ENCODE measurements at regions of chr1 and their contacts with region 1.

Region 1: GRCh38 chr1:45750298-45751038 is at the start of gene IPP:
- DNase-seq: peak; percentile 99
- H3K4me3 ChIP-seq: peak within 1 kb of the TSS; percentile 65 to 83 (median 81)
- H3K27ac ChIP-seq: peak within 1 kb of the TSS; percentile 97
- H3K4me1 ChIP-seq: peaks cover 8% of the 10 kb centered on the region
- H3K27me3 ChIP-seq: no peaks in the 10 kb centered on the region
- CTCF ChIP-seq: peak in 1 of 2 donors; percentile 11
- POLR2A ChIP-seq: peak; percentile 98
- total RNA-seq, gene IPP: 6.3 and 7.2 TPM in 2 replicates

Region 2: GRCh38 chr1:45803301-45803780 is 52.9 kb after region 1 on chr1 and contains the start of gene MAST2:
- CTCF ChIA-PET with region 1: no interaction called
- POLR2A ChIA-PET with region 1: no interaction called
- dilution Hi-C with region 1: no loop called
- intact Hi-C with region 1: loop called (anchors 1 kb)
- DNase-seq: peak; percentile 88
- H3K4me3 ChIP-seq: peak within 1 kb of the TSS; percentile 78 to 98 (median 82)
- H3K27ac ChIP-seq: peak within 1 kb of the TSS; percentile 93
- H3K4me1 ChIP-seq: peaks cover 24% of the 10 kb centered on the region
- H3K27me3 ChIP-seq: no peaks in the 10 kb centered on the region
- CTCF ChIP-seq: no peak
- POLR2A ChIP-seq: peak; percentile 50
- total RNA-seq, gene MAST2: 33.8 and 41.2 TPM in 2 replicates